ENCODE measurements at regions of chr9 and their contacts with region 1.

Region 1: DNA sequence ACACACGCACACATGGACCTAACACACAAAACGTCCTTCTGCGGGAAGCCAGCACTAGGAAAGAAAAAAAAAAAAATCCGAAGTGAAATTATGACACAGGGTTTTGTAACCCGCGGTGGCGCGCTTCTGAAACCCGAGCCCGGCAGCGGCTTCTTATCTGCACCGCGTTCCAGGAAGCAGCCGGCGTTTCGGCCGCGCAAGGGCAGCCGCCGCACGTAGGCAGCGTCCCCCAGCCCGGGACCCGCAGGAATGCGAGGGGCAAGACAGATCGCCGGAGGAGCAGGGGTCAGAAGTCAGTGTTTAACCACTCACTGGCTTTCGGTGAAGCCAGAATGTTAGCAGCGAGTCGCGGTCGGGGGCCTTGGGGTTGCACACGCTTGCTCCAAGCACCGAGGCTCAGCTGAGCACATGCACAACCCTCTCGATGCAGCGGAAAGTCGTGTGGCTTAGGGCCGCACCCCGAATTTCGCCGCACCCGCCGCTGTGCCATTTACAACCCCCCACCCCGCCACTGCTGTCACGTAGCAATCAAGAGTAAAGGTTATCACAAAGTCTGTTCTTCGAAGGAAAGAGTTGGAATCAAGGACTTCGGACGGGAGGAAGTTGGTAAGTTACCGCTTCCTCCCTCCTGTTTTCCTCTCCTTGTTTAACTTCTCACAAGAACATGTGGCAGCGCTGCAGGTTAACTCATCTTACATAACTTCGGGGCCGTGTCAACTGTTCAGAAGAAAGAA is 167.9 kb downstream of the AUH start:
- DNase-seq: peak; percentile 92
- ATAC-seq: peak; percentile 62
- H3K4me3 Mint-ChIP-seq: peak overlapping the region; percentile 65
- H3K27ac Mint-ChIP-seq: peak overlapping the region; percentile 94
- H3K4me1 Mint-ChIP-seq: peaks cover 74% of the 10 kb centered on the region
- H3K27me3 Mint-ChIP-seq: no peaks in the 10 kb centered on the region

Region 2: GRCh38 chr9:91036826-91037510 is 156.9 kb before region 1 on chr9:
- CTCF ChIA-PET with region 1: interaction called, 4 read pairs
- POLR2A ChIA-PET with region 1: interaction called, 3 read pairs
- intact Hi-C with region 1: loop called (anchors 1 to 2 kb)
- DNase-seq: peak; percentile 87
- ATAC-seq: peak; percentile 89
- H3K4me3 Mint-ChIP-seq: peak overlapping the region; percentile 19
- H3K27ac Mint-ChIP-seq: peak overlapping the region; percentile 86
- H3K4me1 Mint-ChIP-seq: peaks cover 52% of the 10 kb centered on the region
- H3K27me3 Mint-ChIP-seq: peaks cover 9% of the 10 kb centered on the region

Region 3: GRCh38 chr9:91101611-91102168 is 92.1 kb before region 1 on chr9:
- CTCF ChIA-PET with region 1: interaction called, 6 read pairs
- POLR2A ChIA-PET with region 1: interaction called, 17 read pairs
- intact Hi-C with region 1: loop called (anchors 1 kb)
- DNase-seq: peak; percentile 96
- ATAC-seq: peak; percentile 82
- H3K4me3 Mint-ChIP-seq: peak overlapping the region; percentile 81
- H3K27ac Mint-ChIP-seq: peak overlapping the region; percentile 97
- H3K4me1 Mint-ChIP-seq: peaks cover 70% of the 10 kb centered on the region
- H3K27me3 Mint-ChIP-seq: no peaks in the 10 kb centered on the region

Region 4: GRCh38 chr9:91122755-91123154 is 71.1 kb before region 1 on chr9:
- CTCF ChIA-PET with region 1: no interaction called
- POLR2A ChIA-PET with region 1: no interaction called
- intact Hi-C with region 1: no loop called
- DNase-seq: no peak
- ATAC-seq: peak; percentile 42
- H3K4me3 Mint-ChIP-seq: no peak overlapping the region
- H3K27ac Mint-ChIP-seq: peak overlapping the region; percentile 6
- H3K4me1 Mint-ChIP-seq: peaks cover 24% of the 10 kb centered on the region
- H3K27me3 Mint-ChIP-seq: peaks cover 16% of the 10 kb centered on the region

Region 5: DNA sequence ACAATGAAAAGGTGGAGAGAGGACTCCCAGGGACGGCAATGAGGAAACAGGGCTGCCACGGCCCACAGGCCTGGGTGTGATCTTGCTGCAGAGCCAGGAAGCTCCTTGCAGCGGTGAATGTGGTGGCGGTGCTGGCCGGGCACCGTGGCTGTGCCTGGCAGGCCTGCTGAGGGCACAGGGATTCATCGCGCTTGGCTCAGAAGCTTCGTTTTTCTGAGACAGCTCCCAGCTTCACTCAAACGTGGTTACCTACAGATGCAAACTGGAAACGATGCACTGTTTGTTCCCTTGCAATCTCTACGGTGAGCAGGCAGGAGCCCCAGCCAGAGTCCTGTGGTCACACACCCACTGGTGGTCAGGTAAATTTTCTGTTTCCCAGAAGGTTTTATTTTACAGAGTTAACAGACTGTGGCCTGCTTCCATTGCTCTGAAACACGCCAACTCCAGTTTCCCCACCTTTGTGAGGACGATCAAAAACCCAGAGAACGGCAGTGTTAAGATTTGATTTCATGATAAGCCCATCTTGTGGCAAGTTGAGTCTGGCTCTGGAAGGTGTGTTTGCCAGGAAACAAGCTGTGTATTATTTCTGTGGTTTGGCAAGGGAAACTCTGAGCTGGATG is 16.1 kb before region 1 on chr9:
- CTCF ChIA-PET with region 1: interaction called, 12 read pairs
- POLR2A ChIA-PET with region 1: interaction called, 30 read pairs
- intact Hi-C with region 1: loop called (anchors 1 kb)
- DNase-seq: peak; percentile 79
- ATAC-seq: peak; percentile 73
- H3K4me3 Mint-ChIP-seq: peak overlapping the region; percentile 22
- H3K27ac Mint-ChIP-seq: peak overlapping the region; percentile 99
- H3K4me1 Mint-ChIP-seq: peaks cover 64% of the 10 kb centered on the region
- H3K27me3 Mint-ChIP-seq: no peaks in the 10 kb centered on the region

Region 6: DNA sequence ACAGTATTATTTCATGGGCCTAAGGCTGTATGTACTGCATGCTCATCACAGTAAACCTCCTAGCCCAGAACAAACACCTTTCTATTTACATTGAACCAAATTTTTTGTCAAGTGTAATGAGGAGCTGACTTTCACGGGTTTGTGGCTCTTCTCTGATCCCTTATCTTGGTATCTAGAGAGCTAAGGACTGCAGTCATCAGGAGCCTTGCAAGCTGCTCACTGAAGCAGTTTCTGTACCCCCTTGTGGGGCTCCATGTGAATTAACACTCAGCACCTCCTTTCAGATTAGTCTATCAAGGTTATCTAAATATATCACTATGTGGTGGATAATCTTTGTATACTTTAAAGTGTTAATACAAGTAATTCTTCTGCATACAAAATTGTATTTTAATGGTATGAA is 59.7 kb after region 1 on chr9:
- CTCF ChIA-PET with region 1: no interaction called
- POLR2A ChIA-PET with region 1: no interaction called
- intact Hi-C with region 1: no loop called
- DNase-seq: peak; percentile 38
- ATAC-seq: peak; percentile 87
- H3K4me3 Mint-ChIP-seq: no peak overlapping the region
- H3K27ac Mint-ChIP-seq: no peak overlapping the region
- H3K4me1 Mint-ChIP-seq: peaks cover 22% of the 10 kb centered on the region
- H3K27me3 Mint-ChIP-seq: no peaks in the 10 kb centered on the region

Region 7: GRCh38 chr9:91361291-91362050 is 167.6 kb after region 1 on chr9 and contains the start of gene AUH:
- CTCF ChIA-PET with region 1: interaction called, 5 read pairs
- POLR2A ChIA-PET with region 1: interaction called, 23 read pairs
- intact Hi-C with region 1: loop called in 1 of 2 experiments (anchors 1 kb)
- DNase-seq: peak; percentile 93
- ATAC-seq: peak; percentile 74
- H3K4me3 Mint-ChIP-seq: peak within 1 kb of the TSS; percentile 87
- H3K27ac Mint-ChIP-seq: peak within 1 kb of the TSS; percentile 86
- H3K4me1 Mint-ChIP-seq: peaks cover 53% of the 10 kb centered on the region
- H3K27me3 Mint-ChIP-seq: no peaks in the 10 kb centered on the region
- total RNA-seq, gene AUH: 30.4 to 30.8 TPM

Measured in activated CD4-positive, alpha-beta T cell treated with anti-CD3 and anti-CD28 coated beads for 36 hours (primary cell).